Endothelial cell of umbilical vein (primary cell): ENCODE measurements at regions of chr3 and their contacts with region 1.

Region 1: GRCh38 chr3:177694316-177694715 is 497.0 kb upstream of the TBL1XR1 start:
- DNase-seq: peak; percentile 95
- H3K4me3 ChIP-seq: peak overlapping the region in 1 of 3 experiments; percentile 5
- H3K27ac ChIP-seq: peak overlapping the region; percentile 43
- H3K4me1 ChIP-seq: peaks cover 18% of the 10 kb centered on the region
- H3K27me3 ChIP-seq: no peaks in the 10 kb centered on the region
- CTCF ChIP-seq: no peak
- POLR2A ChIP-seq: no peak

Region 2: DNA sequence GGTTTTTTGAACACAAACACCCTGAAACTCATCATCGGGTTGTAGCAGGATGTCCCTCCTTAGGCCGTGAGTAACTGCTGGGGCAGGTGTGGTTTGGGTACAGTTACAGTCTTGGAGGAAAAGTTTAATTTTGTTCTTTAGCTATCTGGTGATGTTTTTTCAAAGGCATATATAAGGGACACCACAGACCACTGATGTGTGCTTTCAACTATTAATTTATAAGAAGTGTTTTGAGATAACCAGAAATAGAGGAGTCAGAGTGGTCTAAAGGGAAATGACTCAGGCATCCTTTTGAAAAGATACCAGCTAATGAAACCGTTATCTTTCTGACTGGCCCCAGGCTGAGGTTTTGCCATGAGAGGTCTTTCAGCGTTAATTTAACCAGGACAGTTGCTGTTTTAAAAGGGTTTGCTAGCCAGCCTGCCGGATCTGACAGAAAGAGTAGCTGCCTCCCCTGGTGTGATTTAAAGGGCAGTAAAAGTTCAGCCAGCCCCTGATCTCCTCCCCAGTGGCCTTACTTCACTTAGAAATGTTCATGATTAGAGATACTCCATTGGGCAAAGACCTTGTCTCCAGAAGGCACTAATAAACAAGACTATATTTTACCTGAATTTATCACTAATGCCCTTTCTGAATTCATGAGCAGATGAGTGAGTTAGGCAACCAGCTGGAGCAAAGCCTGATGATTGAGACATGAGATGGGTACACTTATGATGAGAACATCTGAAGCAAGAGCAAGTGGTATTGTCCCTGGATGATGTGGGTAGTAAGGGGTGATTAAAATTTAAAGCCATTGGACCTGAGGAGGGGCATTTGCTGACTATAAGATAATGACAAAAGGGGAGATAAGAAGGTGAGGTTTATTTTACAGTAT is 14.5 kb before region 1 on chr3:
- CTCF ChIA-PET with region 1: interaction called, 10 read pairs
- POLR2A ChIA-PET with region 1: interaction called, 3 read pairs
- dilution Hi-C with region 1: no loop called
- intact Hi-C with region 1: loop called (anchors 1 kb)
- DNase-seq: peak; percentile 76
- H3K4me3 ChIP-seq: no peak overlapping the region
- H3K27ac ChIP-seq: peak overlapping the region; percentile 72
- H3K4me1 ChIP-seq: peaks cover 45% of the 10 kb centered on the region
- H3K27me3 ChIP-seq: no peaks in the 10 kb centered on the region
- CTCF ChIP-seq: no peak
- POLR2A ChIP-seq: no peak